ENCODE measurements at regions of chr20 and their contacts with region 1.

Region 1: GRCh38 chr20:6882561-6883280 is 115.2 kb downstream of the BMP2 start:
- DNase-seq: no peak
- ATAC-seq: peak; percentile 25; the same call in 2 of the 3 replicates
- H3K4me3 ChIP-seq: no peak overlapping the region
- H3K27ac ChIP-seq: no peak overlapping the region
- H3K4me1 ChIP-seq: no peaks in the 10 kb centered on the region
- H3K27me3 ChIP-seq: no peaks in the 10 kb centered on the region
- CTCF ChIP-seq: no peak
- EP300 ChIP-seq: no peak
- POLR2A ChIP-seq: no peak
- RAD21 ChIP-seq: no peak

Region 2: DNA sequence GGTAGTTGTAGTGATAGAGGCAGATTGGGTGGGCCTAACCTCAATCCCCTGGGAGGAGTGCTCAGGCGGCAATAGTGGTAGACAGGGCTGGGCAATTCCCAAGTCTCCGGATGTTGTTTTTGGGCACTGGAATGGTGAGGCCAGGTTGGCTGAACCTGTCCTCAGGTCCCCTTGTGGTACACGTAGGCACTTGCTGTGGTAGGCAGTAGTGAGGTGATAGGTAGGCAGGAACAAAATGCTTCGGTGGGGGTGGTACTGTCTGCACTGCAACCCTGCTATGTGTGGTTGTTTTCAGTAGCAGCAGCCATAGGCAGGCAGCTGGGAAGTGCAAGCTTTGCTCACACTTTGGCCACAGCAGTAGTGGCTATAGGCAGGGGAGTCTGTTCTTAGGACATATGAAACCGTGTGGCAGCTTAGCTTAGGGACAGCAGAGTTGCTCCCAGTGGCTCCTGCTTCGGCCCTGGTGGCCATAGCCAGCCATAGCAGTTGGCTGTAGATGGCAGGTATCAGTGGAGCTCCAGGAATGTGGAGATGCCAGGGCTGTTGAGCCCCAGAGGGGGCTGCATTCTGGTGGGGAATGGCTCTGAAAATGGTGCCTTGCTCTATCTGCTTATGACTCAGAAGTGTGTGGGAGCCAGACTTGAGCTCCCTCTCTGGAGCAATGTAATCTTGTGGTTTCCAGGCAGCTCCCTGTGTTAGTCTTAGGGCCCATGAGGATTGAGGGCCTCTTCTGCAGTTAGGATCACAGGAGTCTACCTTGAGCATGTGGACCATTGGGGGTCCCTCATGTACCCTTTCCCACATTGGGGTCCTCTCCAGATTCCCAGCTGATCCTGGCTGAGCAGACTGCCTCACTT is 357.0 kb before region 1 on chr20:
- CTCF ChIA-PET with region 1: no interaction called
- POLR2A ChIA-PET with region 1: no interaction called
- RAD21 ChIA-PET with region 1: no interaction called
- SMC1A ChIA-PET with region 1: no interaction called
- in situ Hi-C with region 1: no loop called
- intact Hi-C with region 1: no loop called
- DNase-seq: no peak
- ATAC-seq: peak; percentile 31; the same call in 1 of the 3 replicates
- H3K4me3 ChIP-seq: no peak overlapping the region
- H3K27ac ChIP-seq: no peak overlapping the region
- H3K4me1 ChIP-seq: no peaks in the 10 kb centered on the region
- H3K27me3 ChIP-seq: no peaks in the 10 kb centered on the region
- CTCF ChIP-seq: no peak
- EP300 ChIP-seq: no peak
- POLR2A ChIP-seq: no peak
- RAD21 ChIP-seq: no peak

Region 3: GRCh38 chr20:6756693-6757595 is 125.8 kb before region 1 on chr20:
- CTCF ChIA-PET with region 1: no interaction called
- POLR2A ChIA-PET with region 1: no interaction called
- RAD21 ChIA-PET with region 1: no interaction called
- SMC1A ChIA-PET with region 1: no interaction called
- in situ Hi-C with region 1: no loop called
- intact Hi-C with region 1: no loop called
- DNase-seq: no peak
- ATAC-seq: no peak
- H3K4me3 ChIP-seq: no peak overlapping the region
- H3K27ac ChIP-seq: no peak overlapping the region
- H3K4me1 ChIP-seq: no peaks in the 10 kb centered on the region
- H3K27me3 ChIP-seq: no peaks in the 10 kb centered on the region
- CTCF ChIP-seq: no peak
- EP300 ChIP-seq: no peak
- POLR2A ChIP-seq: no peak
- RAD21 ChIP-seq: no peak

Region 4: DNA sequence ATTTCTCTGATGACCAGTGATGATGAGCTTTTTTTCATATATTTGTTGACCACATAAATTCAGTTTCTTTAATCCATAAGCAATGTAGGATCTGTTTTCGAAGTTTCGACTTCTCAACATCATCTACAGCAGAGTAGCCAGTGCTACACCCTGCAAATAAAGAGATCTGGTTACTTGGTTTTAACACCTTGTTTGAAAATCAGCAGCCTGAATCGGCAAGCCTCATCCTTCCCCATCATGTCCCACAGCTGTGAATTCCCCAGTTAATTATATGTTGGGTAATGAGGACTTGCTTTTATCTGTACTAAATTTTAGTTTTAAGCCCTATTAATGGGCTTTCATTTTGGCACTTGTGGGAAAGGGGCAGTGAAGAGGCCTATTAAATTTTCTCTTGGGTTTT is 34.7 kb before region 1 on chr20:
- CTCF ChIA-PET with region 1: interaction called, 4 read pairs
- POLR2A ChIA-PET with region 1: interaction called, 6 read pairs
- RAD21 ChIA-PET with region 1: interaction called, 7 read pairs
- SMC1A ChIA-PET with region 1: interaction called, 27 read pairs
- in situ Hi-C with region 1: no loop called
- intact Hi-C with region 1: no loop called
- DNase-seq: no peak
- ATAC-seq: peak; percentile 62
- H3K4me3 ChIP-seq: no peak overlapping the region
- H3K27ac ChIP-seq: no peak overlapping the region
- H3K4me1 ChIP-seq: no peaks in the 10 kb centered on the region
- H3K27me3 ChIP-seq: no peaks in the 10 kb centered on the region
- CTCF ChIP-seq: no peak
- EP300 ChIP-seq: peak; percentile 28 to 51; a peak in 1 of 4 replicates
- POLR2A ChIP-seq: no peak
- RAD21 ChIP-seq: no peak

Region 5: DNA sequence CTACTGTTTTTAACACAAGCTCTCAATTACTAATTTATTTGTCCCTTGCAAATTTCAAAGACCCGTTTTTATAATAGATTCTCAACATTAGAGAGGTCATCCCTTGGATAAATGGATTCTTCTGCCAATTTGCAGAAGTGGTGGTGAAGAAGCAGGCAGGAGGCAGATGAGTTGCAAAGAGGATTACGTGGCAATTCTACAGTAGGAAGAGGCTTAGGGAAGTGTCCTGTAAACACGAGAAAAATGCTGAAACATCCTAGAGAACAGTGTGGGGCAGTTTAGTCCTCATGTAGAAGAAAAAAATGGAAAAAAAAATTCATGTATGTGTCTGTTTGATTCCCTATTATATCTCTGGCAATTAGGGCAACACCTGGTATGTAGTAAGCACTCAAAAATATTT is 27.6 kb before region 1 on chr20:
- CTCF ChIA-PET with region 1: no interaction called
- POLR2A ChIA-PET with region 1: interaction called, 5 read pairs
- RAD21 ChIA-PET with region 1: interaction called, 5 read pairs
- SMC1A ChIA-PET with region 1: interaction called, 27 read pairs
- in situ Hi-C with region 1: no loop called
- intact Hi-C with region 1: no loop called
- DNase-seq: no peak
- ATAC-seq: no peak; the same call in 2 of the 3 replicates
- H3K4me3 ChIP-seq: no peak overlapping the region
- H3K27ac ChIP-seq: no peak overlapping the region
- H3K4me1 ChIP-seq: no peaks in the 10 kb centered on the region
- H3K27me3 ChIP-seq: no peaks in the 10 kb centered on the region
- CTCF ChIP-seq: no peak
- EP300 ChIP-seq: no peak
- POLR2A ChIP-seq: no peak
- RAD21 ChIP-seq: no peak

Region 6: DNA sequence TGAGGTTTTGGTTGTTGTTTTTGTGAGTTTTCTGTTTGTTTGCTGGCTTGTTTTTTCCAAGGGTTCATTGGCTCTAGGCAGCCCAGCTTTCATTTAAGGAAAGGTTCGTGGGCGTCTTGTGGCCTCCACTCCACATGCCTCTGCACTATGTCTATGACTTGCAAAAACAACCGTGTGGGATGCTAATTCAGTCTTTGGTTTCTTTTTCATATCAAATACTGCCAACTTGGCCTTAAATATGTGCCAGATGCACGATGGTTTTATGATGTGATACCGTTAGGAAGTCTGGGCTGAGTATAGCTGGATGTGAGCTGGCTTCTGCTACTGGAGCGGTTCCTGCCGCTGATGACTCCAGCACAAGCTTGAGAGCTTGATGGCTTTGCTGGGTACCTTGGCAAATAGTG is 18.9 kb before region 1 on chr20:
- CTCF ChIA-PET with region 1: interaction called, 9 read pairs
- POLR2A ChIA-PET with region 1: interaction called, 9 read pairs
- RAD21 ChIA-PET with region 1: interaction called, 68 read pairs
- SMC1A ChIA-PET with region 1: interaction called, 120 read pairs
- in situ Hi-C with region 1: no loop called
- intact Hi-C with region 1: no loop called
- DNase-seq: no peak
- ATAC-seq: peak; percentile 60
- H3K4me3 ChIP-seq: no peak overlapping the region
- H3K27ac ChIP-seq: no peak overlapping the region
- H3K4me1 ChIP-seq: no peaks in the 10 kb centered on the region
- H3K27me3 ChIP-seq: no peaks in the 10 kb centered on the region
- CTCF ChIP-seq: no peak
- EP300 ChIP-seq: no peak
- POLR2A ChIP-seq: no peak
- RAD21 ChIP-seq: no peak

Region 7: DNA sequence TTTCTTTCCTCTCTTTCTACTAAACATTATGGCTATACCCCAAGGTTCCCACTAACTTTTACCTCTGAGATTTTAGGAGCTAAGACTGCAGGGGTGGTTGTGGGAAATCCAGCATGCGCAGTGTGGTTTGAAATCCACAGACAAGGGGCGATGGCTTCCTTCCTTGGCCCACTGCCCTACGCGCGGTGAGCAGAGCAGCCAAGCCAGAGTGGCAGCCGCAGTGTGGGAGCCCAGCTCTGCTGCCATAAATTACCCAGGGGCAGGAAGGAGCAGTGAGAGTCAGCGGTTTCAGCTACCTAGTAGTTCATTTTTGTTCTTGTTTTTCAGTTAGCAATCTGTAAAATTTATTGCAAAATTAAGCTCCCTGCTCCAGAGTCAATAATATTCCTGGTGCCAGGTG is 13.9 kb before region 1 on chr20:
- CTCF ChIA-PET with region 1: interaction called, 9 read pairs
- POLR2A ChIA-PET with region 1: interaction called, 14 read pairs
- RAD21 ChIA-PET with region 1: interaction called, 68 read pairs
- SMC1A ChIA-PET with region 1: interaction called, 120 read pairs
- in situ Hi-C with region 1: no loop called
- intact Hi-C with region 1: no loop called
- DNase-seq: no peak
- ATAC-seq: peak; percentile 68
- H3K4me3 ChIP-seq: no peak overlapping the region
- H3K27ac ChIP-seq: no peak overlapping the region
- H3K4me1 ChIP-seq: no peaks in the 10 kb centered on the region
- H3K27me3 ChIP-seq: no peaks in the 10 kb centered on the region; a peak in 1 of 4 replicates
- CTCF ChIP-seq: no peak
- EP300 ChIP-seq: no peak
- POLR2A ChIP-seq: no peak
- RAD21 ChIP-seq: no peak

Region 8: GRCh38 chr20:6898928-6899327 is 16.2 kb after region 1 on chr20:
- CTCF ChIA-PET with region 1: interaction called, 34 read pairs
- POLR2A ChIA-PET with region 1: interaction called, 33 read pairs
- RAD21 ChIA-PET with region 1: no interaction called
- SMC1A ChIA-PET with region 1: interaction called, 13 read pairs
- in situ Hi-C with region 1: no loop called
- intact Hi-C with region 1: no loop called
- DNase-seq: no peak
- ATAC-seq: peak; percentile 52
- H3K4me3 ChIP-seq: no peak overlapping the region
- H3K27ac ChIP-seq: no peak overlapping the region
- H3K4me1 ChIP-seq: no peaks in the 10 kb centered on the region
- H3K27me3 ChIP-seq: no peaks in the 10 kb centered on the region; a peak in 1 of 4 replicates
- CTCF ChIP-seq: no peak
- EP300 ChIP-seq: no peak
- POLR2A ChIP-seq: no peak
- RAD21 ChIP-seq: no peak

Region 9: DNA sequence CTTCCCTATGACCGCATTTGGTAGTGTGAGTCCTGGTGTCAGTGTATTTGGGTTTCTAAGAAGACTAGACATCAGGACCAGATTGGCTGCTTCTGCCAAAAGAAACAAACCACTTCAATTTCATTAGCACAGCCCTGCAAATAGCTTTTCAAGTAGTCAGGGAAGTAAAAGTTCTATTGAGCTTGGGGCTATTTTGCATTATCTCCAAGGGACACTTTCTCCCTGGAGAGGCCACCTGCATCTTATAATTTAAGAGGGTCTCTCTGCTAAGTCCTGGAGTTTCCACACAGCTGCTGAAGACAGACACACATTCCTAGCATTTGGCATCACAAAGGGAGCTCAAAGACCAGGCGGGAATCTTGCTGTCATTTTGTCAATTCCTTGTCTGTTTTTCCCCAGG is 26.0 kb after region 1 on chr20:
- CTCF ChIA-PET with region 1: interaction called, 6 read pairs
- POLR2A ChIA-PET with region 1: interaction called, 7 read pairs
- RAD21 ChIA-PET with region 1: interaction called, 11 read pairs
- SMC1A ChIA-PET with region 1: interaction called, 88 read pairs
- in situ Hi-C with region 1: no loop called
- intact Hi-C with region 1: no loop called
- DNase-seq: no peak
- ATAC-seq: no peak
- H3K4me3 ChIP-seq: no peak overlapping the region
- H3K27ac ChIP-seq: no peak overlapping the region
- H3K4me1 ChIP-seq: no peaks in the 10 kb centered on the region
- H3K27me3 ChIP-seq: no peaks in the 10 kb centered on the region
- CTCF ChIP-seq: no peak
- EP300 ChIP-seq: no peak
- POLR2A ChIP-seq: no peak
- RAD21 ChIP-seq: no peak

Region 10: GRCh38 chr20:7123457-7123856 is 240.7 kb after region 1 on chr20:
- CTCF ChIA-PET with region 1: no interaction called
- POLR2A ChIA-PET with region 1: no interaction called
- RAD21 ChIA-PET with region 1: no interaction called
- SMC1A ChIA-PET with region 1: no interaction called
- in situ Hi-C with region 1: no loop called
- intact Hi-C with region 1: no loop called
- DNase-seq: no peak
- ATAC-seq: no peak
- H3K4me3 ChIP-seq: no peak overlapping the region
- H3K27ac ChIP-seq: no peak overlapping the region
- H3K4me1 ChIP-seq: no peaks in the 10 kb centered on the region
- H3K27me3 ChIP-seq: no peaks in the 10 kb centered on the region
- CTCF ChIP-seq: no peak
- EP300 ChIP-seq: no peak
- POLR2A ChIP-seq: no peak
- RAD21 ChIP-seq: no peak

Measured in GM12878 (cell line).